ENCODE measurements at regions of chr17 and their contacts with region 1.

Region 1: DNA sequence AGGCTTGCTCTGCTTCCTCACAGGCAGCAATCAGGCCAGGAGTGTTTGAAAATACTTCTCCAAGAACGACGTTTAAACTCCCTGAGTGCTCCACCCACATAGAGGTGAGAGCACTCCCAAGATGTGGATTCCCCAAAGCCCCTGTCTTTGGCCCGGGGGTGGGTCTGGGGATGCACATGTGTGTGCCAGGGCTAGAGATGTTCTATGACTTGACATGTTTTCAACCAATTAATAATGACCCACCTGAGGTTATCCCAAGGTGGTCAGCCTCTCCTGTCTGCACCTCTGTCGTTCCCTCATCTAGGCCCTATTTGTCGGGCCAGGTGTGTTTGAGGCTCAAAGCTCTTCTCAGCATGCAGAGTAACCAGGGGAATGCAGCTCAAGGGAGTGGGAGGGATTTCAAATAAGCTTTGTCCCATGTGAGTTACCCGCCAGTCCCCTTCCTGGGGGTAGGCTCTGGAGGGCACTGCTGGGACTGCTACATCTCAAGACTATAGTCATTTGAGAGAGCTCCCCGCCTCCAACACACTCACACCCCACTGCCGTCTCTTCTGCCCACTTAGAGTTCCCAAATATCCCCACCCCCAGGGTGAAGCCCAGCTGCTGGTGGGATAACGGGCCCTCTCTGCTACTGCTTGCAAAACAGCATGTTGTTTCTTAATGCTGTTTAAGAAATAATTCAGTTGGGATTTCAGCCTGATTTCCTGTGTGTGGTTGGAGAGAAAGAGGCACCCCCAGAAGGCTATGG is 3.8 kb upstream of the MPO start:
- DNase-seq: no peak
- ATAC-seq: no peak
- H3K4me3 ChIP-seq: no peak overlapping the region
- H3K27ac ChIP-seq: no peak overlapping the region
- H3K4me1 ChIP-seq: no peaks in the 10 kb centered on the region
- H3K27me3 ChIP-seq: peaks cover 13% of the 10 kb centered on the region
- CTCF ChIP-seq: no peak

Region 2: GRCh38 chr17:57685505-57686132 is 598.9 kb before region 1 on chr17:
- CTCF ChIA-PET with region 1: no interaction called
- POLR2A ChIA-PET with region 1: no interaction called
- intact Hi-C with region 1: no loop called
- DNase-seq: peak; percentile 58
- ATAC-seq: no peak
- H3K4me3 ChIP-seq: no peak overlapping the region
- H3K27ac ChIP-seq: no peak overlapping the region
- H3K4me1 ChIP-seq: peaks cover 8% of the 10 kb centered on the region
- H3K27me3 ChIP-seq: no peaks in the 10 kb centered on the region
- CTCF ChIP-seq: no peak

Region 3: DNA sequence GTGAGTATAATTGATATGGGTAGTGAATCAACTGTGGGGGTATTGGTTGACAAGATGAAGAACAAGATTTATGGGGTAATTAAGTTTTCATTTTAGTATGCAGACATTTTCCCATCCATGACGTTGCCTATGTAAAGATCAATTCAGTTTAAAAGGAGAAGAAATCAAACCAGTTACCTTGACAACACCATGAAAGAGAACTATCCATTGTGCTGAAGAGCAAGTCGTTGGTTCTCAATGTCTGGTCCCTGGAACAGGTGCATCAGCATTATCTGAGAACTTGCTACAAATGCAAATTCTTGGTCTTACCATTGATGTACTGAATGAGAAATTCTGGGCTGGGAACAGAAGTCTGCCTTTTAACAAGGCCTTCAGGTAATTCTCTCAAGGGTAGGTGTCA is 118.5 kb before region 1 on chr17:
- CTCF ChIA-PET with region 1: no interaction called
- POLR2A ChIA-PET with region 1: no interaction called
- intact Hi-C with region 1: no loop called
- DNase-seq: no peak
- ATAC-seq: no peak
- H3K4me3 ChIP-seq: no peak overlapping the region
- H3K27ac ChIP-seq: no peak overlapping the region
- H3K4me1 ChIP-seq: no peaks in the 10 kb centered on the region
- H3K27me3 ChIP-seq: peaks cover 83% of the 10 kb centered on the region
- CTCF ChIP-seq: no peak

Region 4: DNA sequence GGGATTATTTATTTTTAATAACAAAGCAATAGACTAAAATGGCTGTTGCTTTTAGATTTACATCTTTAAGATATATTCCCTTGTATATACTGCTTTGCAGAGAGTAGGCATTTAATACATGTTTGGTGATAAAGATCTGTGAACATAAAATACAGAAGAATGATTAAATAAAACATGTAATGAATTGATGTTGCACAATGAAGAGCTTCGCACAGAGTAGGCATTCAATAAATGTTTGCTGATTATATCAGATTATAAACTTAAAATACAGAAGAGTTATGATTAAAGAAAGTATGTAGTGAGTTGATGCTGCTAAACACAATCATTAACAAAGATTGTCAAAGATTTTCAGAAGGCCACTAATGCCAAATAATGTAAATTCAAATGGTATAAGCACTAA is 179.3 kb after region 1 on chr17:
- CTCF ChIA-PET with region 1: no interaction called
- POLR2A ChIA-PET with region 1: interaction called, 10 read pairs
- intact Hi-C with region 1: no loop called
- DNase-seq: no peak
- ATAC-seq: no peak
- H3K4me3 ChIP-seq: no peak overlapping the region
- H3K27ac ChIP-seq: no peak overlapping the region
- H3K4me1 ChIP-seq: no peaks in the 10 kb centered on the region
- H3K27me3 ChIP-seq: peaks cover 57% of the 10 kb centered on the region
- CTCF ChIP-seq: no peak